IMR-90 (cell line): ENCODE measurements at regions of chr6 and their contacts with region 1.

Region 1: DNA sequence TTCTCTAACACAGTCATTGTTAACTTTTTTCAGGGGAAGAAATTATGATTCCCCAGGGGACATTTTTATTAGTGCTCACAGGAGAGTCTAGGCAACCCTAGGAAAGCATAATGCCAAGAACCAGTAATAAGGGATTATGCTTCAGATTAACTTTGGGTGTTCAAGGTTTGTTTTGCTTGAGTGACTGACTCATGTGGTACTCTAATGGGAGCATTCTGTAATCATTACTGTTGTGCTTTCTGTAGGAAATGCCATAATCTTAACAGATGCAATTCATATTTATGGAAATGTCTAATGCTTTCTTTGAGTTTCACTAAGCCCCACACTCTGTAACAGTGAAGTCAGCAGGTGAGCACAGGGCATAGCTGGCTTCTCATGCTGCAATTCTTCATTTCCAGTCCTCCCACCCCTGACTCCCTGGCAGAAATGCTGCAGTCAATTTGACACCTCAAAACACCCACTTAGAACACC is 263.4 kb upstream of the MAN1A1 start:
- DNase-seq: peak; percentile 52
- ATAC-seq: peak; percentile 81
- H3K4me3 ChIP-seq: no peak overlapping the region
- H3K27ac ChIP-seq: no peak overlapping the region
- H3K4me1 ChIP-seq: peaks cover 5% of the 10 kb centered on the region
- H3K27me3 ChIP-seq: no peaks in the 10 kb centered on the region; the same call in 1 of the 2 replicates
- CTCF ChIP-seq: no peak
- POLR2A ChIP-seq: no peak
- RAD21 ChIP-seq: no peak

Region 2: GRCh38 chr6:119116712-119117281 is 496.1 kb before region 1 on chr6:
- CTCF ChIA-PET with region 1: no interaction called
- POLR2A ChIA-PET with region 1: no interaction called
- dilution Hi-C with region 1: no loop called
- in situ Hi-C with region 1: no loop called
- intact Hi-C with region 1: no loop called
- DNase-seq: no peak
- ATAC-seq: no peak
- H3K4me3 ChIP-seq: no peak overlapping the region
- H3K27ac ChIP-seq: no peak overlapping the region
- H3K4me1 ChIP-seq: no peaks in the 10 kb centered on the region
- H3K27me3 ChIP-seq: no peaks in the 10 kb centered on the region; the same call in 1 of the 2 replicates
- CTCF ChIP-seq: no peak
- POLR2A ChIP-seq: no peak
- RAD21 ChIP-seq: no peak

Region 3: DNA sequence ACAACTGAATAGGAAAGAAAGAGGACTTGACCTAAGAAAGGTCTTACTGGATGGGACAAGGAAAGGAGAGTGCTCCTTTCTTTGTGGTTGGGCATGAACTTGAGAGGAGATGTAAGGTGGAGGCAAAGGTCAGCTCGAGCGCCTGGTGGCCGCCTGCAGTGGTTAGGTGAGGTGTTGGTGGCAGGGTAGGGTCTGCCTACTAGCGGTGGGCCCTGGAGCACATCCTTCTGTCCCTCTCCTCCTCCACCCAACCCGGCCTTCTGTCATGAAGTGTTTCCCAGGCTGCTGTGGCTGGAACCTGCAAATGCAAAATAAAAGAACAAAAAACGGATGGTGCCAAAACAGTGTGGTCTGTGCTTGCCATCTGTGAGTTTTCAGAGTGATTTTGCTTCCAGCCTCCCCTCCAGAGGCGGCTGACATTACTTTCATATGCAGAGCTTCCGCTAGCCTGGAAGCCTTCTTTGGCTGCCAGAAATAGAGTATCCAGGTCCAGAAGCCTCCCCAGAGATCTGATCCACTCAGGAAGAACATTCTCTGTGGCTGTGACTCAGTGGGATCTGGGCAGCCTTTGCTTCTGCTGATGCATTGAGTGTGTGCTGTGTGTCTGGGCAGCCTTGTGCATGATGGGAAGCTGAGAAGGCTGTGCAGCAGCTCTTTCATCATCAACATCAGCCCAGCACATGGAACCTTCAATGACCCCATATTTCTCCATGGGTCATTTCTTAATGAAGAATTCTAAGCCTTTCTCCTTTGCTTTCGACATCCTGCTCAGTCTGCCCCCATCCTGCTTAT is 454.7 kb before region 1 on chr6:
- CTCF ChIA-PET with region 1: no interaction called
- POLR2A ChIA-PET with region 1: no interaction called
- dilution Hi-C with region 1: no loop called
- in situ Hi-C with region 1: no loop called
- intact Hi-C with region 1: loop called (anchors 10 kb)
- DNase-seq: peak; percentile 44
- ATAC-seq: no peak; the same call in 1 of the 2 replicates
- H3K4me3 ChIP-seq: no peak overlapping the region
- H3K27ac ChIP-seq: no peak overlapping the region
- H3K4me1 ChIP-seq: no peaks in the 10 kb centered on the region
- H3K27me3 ChIP-seq: no peaks in the 10 kb centered on the region; the same call in none of the 2 replicates
- CTCF ChIP-seq: no peak
- POLR2A ChIP-seq: no peak
- RAD21 ChIP-seq: no peak

Region 4: DNA sequence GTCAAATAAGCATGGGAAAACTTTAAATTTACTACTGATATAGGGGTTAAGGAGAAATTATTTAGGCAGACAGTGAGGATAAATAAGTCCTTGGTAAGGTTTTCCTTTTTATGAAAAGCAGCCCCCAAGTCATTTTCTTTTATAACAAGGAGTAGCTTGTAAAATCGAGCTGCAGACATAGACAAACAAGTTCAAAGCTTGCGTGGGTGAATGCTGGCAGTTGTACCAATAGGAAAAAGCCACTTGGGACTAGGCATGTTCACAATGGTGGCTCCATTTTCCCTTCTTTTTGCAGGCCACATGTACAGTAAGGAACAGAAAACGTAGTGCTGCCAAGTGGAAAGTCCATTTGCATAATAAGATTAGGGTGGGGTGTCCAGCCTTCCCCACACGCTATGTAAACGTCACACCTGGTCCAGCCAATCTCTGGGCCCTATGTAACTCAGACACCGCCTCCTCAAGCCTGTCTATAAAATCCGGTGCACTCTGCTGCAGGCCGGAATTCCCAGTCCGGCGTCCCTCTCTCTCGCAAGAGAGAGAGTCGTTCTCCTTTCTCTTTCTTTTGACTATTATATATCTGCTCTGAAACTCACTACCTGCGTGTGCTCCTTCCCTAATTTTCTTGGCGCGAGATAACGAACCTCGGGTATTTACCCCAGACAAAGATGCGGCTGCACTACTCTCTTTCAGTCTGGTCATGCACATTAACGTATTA is 46.2 kb before region 1 on chr6:
- CTCF ChIA-PET with region 1: no interaction called
- POLR2A ChIA-PET with region 1: no interaction called
- dilution Hi-C with region 1: no loop called
- in situ Hi-C with region 1: no loop called
- intact Hi-C with region 1: no loop called
- DNase-seq: no peak
- ATAC-seq: no peak
- H3K4me3 ChIP-seq: no peak overlapping the region
- H3K27ac ChIP-seq: no peak overlapping the region
- H3K4me1 ChIP-seq: no peaks in the 10 kb centered on the region
- H3K27me3 ChIP-seq: no peaks in the 10 kb centered on the region; the same call in 1 of the 2 replicates
- CTCF ChIP-seq: no peak
- POLR2A ChIP-seq: no peak
- RAD21 ChIP-seq: no peak

Region 5: DNA sequence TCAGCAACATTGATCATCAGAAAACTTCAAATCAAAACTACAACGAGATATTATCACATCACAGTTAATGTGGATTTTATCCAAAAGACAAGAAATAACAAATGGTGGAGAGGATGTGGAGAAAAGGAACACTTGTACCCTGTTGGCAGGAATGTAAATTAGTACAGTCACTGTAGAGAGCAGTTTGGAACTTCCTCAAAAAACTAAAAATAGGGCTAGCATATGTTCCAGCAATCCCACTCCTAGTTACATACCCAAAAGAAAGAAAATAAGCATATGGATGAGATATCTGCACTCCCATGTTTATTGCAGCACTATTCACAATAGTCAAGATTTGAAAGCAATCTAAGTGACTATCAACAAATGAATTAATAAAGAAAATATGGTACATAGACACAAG is 624.3 kb after region 1 on chr6:
- CTCF ChIA-PET with region 1: no interaction called
- POLR2A ChIA-PET with region 1: no interaction called
- dilution Hi-C with region 1: no loop called
- in situ Hi-C with region 1: no loop called
- intact Hi-C with region 1: no loop called
- DNase-seq: no peak
- ATAC-seq: no peak
- H3K4me3 ChIP-seq: no peak overlapping the region
- H3K27ac ChIP-seq: no peak overlapping the region
- H3K4me1 ChIP-seq: no peaks in the 10 kb centered on the region
- H3K27me3 ChIP-seq: no peaks in the 10 kb centered on the region
- CTCF ChIP-seq: no peak
- POLR2A ChIP-seq: no peak
- RAD21 ChIP-seq: no peak